Posterior vena cava (tissue), 2 donors: ENCODE measurements at regions of chr4 and their contacts with region 1.

Region 1: DNA sequence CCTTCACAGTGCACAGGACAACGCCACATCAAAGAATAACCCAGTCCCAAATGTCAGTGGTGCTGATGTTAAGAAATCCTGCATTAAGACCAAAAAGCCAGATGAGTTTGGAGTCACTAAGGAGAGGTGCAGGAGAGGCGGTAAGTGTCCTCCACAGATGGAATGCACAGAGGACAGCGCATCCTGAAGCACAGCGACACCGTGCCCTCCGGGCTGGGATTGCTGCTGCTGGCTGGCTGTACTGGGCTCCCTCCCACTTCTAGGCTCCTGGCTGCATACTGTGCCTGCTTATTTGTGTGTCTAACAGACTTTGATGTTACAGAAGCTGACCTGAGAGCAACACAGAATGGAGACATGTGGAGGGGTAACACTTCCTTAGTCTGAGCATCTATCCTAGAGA is 325.6 kb upstream of the BOD1L1 start:
- DNase-seq: no peak

Region 2: GRCh38 chr4:15702941-15703403 is 1749.9 kb after region 1 on chr4 and contains the start of gene BST1:
- intact Hi-C with region 1: loop called in 1 of 2 experiments (anchors 5 kb)
- DNase-seq: peak; percentile 93
- total RNA-seq, gene BST1: 19.3 to 26.2 TPM